Right ventricle myocardium inferior (tissue), 1 donor: ENCODE measurements at regions of chr7 and their contacts with region 1.

Region 1: DNA sequence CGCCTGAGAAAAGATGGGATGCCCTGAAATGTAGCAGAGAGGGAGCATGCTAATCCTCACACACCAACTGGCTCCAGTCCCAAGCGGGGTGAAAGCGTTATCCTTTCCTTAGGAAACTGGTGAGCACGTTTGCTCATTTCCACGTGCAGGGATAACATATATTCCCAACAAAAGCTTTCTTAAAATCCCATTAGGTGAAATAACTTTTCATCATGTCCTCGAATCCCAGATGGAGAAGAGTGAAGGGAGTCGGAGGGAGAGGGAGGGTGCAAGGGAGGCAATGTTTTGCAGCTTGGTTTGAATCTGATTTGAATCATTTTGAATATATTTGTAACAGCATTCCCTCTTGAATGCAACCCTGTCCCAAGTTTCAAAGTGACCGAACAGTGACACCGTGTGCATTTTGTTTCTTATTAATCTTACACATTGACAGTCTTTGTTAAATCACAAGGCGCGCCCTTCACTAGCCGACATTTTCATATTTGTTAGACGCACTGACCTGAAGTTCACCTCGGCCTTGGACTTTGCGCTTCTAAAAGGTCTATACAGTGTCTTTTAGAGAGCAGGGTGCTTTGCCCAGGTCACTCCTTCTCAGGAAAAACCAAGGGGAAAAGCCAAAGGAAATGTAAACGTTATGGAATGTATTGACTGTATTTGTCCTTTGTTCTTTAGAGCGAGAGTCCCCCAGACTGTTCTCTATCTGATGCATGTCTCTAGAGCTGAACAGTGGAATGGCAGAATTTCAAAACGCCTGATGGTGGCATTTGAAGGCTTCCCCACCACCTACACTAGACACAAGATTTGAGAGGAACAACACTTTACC is 3.1 kb upstream of the HOXA4 start:
- DNase-seq: no peak
- ATAC-seq: no peak

Region 2: DNA sequence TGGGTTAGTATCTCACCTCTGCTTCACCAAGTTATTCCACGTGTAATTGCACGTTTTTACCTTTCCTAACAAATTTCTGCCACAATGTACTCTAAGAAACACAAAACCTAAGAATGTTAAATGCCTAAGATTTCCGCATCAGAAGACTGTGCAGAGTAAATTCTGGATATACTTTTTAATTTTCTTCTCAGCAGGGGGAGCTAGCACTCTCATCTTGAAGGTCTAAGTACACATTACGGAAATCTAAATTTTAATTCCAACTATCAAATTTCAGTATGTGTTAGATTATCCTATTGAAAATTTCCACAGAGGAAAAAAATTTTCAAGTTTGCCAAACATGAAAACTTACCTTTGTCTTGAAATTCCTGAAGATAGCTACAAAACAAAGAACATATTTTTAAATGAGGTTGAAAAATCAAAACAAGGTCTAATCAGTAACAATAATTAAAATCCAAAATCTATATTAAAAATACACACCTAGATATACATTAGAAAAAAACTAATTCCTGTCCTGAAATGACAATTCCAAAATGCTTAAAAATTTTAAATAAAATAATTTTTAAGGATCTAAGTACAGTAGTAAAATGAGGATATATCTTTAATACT is 279.7 kb before region 1 on chr7:
- intact Hi-C with region 1: loop called (anchors 2 kb)
- DNase-seq: no peak
- ATAC-seq: no peak